Activated T-helper 1 cell treated with anti-CD3 and anti-CD28 coated beads, Interleukin-12 subunit alpha, Interleukin-12 subunit beta, Interleukin-2, Interleukin-4 antibody, amounts not matched to agents 30 ng/mL and 10 ng/mL and 1 ng/mL, durations not matched to agents 14 hours and 24 hours and 36 hours (primary cell): ENCODE measurements at regions of chr3 and their contacts with region 1.

Region 1: GRCh38 chr3:143060906-143061305 is 58.7 kb upstream of the CHST2 start:
- DNase-seq: no peak
- H3K4me3 Mint-ChIP-seq: no peak overlapping the region
- H3K27ac Mint-ChIP-seq: peak overlapping the region; percentile 66
- H3K4me1 Mint-ChIP-seq: peaks cover 22% of the 10 kb centered on the region
- H3K27me3 Mint-ChIP-seq: no peaks in the 10 kb centered on the region

Region 2: GRCh38 chr3:142787719-142788118 is 273.2 kb before region 1 on chr3:
- intact Hi-C with region 1: no loop called
- DNase-seq: no peak
- H3K4me3 Mint-ChIP-seq: no peak overlapping the region
- H3K27ac Mint-ChIP-seq: no peak overlapping the region
- H3K4me1 Mint-ChIP-seq: no peaks in the 10 kb centered on the region
- H3K27me3 Mint-ChIP-seq: peaks cover 4% of the 10 kb centered on the region

Region 3: DNA sequence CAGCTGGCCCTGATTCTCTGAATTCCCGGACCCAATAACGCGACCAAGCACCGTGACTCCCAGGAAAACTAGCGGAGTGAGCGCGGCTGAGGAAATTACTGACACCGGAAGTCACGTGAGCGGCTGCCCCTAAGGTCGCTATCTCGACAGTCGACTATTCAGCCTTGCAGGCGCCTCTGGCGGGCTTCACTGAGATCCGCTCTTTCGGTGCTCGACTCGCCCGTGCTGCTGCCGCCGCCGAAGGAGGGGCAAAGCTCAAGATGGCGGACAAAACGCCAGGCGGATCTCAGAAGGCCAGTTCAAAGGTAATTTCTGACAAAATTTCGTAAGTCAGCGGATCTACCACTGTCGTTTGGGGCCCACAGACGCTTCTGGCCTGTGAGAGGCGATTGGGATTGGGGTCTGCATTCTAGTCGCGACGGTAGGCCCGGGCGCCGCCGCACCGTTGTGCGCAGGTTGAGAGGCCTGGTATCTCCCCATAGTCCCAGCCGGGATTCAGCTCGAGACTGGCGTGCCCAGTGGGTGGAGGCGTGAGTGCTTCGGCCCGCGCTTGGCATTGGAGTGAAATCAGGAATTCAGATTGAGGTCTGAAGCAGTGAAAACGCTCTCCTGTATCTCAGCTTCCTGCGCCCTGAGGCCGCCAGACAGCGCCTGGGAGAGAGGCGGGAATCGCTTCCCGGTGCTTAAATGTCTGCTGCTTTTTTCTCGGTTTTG is 59.4 kb before region 1 on chr3 and contains the start of gene U2SURP:
- intact Hi-C with region 1: loop called (anchors 2 kb)
- DNase-seq: peak; percentile 91
- H3K4me3 Mint-ChIP-seq: peak within 1 kb of the TSS; percentile 95
- H3K27ac Mint-ChIP-seq: peak within 1 kb of the TSS; percentile 96
- H3K4me1 Mint-ChIP-seq: peaks cover 45% of the 10 kb centered on the region
- H3K27me3 Mint-ChIP-seq: peaks cover 6% of the 10 kb centered on the region
- total RNA-seq, gene U2SURP: 186 and 205 TPM in 2 replicates

Region 4: GRCh38 chr3:143037867-143038266 is 23.0 kb before region 1 on chr3:
- intact Hi-C with region 1: loop called (anchors 1 kb)
- DNase-seq: no peak
- H3K4me3 Mint-ChIP-seq: no peak overlapping the region
- H3K27ac Mint-ChIP-seq: no peak overlapping the region
- H3K4me1 Mint-ChIP-seq: peaks cover 17% of the 10 kb centered on the region
- H3K27me3 Mint-ChIP-seq: no peaks in the 10 kb centered on the region

Region 5: DNA sequence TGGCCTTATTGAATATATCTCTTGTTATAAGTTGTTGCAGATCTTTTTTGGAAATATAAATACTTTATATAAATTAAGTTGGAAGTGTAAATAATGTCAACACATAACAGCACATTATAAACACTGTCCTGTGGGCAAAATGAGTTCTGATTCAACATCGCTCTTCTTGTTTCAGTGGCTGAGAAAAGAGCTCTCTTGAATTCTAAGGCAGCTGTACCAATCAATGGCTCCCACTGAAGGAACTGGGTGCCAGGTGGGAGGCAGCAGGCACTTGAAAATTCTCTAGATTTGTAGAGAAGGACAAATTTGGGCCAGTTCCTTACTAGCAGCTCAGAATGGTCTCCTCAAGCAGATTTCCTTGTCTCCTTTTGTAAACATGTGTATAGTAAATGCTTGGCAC is 104.3 kb after region 1 on chr3:
- intact Hi-C with region 1: loop called (anchors 1 kb)
- DNase-seq: no peak
- H3K4me3 Mint-ChIP-seq: peak overlapping the region; percentile 52
- H3K27ac Mint-ChIP-seq: peak overlapping the region; percentile 87
- H3K4me1 Mint-ChIP-seq: peaks cover 71% of the 10 kb centered on the region
- H3K27me3 Mint-ChIP-seq: peaks cover 2% of the 10 kb centered on the region

Region 6: DNA sequence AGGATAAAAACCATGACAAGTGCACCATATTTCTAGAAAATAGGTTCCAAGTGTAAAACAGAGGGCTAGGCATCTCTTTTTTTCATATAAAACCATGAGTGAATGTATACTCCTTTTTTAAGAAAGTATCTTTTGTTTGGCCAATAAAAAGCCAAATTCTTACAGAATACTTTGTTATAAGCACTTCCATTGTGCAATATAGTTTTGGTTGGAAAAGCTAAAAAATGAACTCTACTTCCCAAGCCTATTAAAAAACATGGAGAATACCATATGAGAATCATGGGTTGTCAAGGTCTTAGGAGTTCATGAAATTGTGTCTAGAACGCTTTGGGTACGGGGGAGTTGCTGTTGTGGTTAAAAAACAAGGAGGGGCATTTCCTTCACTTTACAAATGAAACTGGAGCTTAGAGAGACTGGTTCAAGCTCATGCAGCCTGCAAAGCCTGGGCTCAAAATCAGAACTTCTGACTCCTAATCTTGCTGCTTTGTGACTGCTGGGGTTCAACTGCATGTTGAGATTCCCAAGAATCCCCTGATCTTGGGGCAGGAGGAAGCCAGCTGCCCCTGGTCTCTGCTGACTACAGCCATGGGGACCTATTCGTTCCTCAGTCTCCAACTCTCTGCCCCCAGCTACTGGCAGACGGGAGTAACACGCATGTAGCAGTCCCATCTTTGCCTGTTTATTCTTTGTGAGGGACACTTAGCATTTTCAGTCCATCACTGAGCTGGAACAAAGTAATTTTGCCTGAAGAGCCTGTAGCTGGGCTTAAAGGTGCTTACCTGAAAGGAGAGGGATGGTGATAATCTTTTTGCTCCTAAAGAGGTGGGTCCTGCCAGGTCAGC is 287.8 kb after region 1 on chr3:
- intact Hi-C with region 1: loop called (anchors 5 kb)
- DNase-seq: no peak
- H3K4me3 Mint-ChIP-seq: no peak overlapping the region
- H3K27ac Mint-ChIP-seq: no peak overlapping the region
- H3K4me1 Mint-ChIP-seq: peaks cover 28% of the 10 kb centered on the region
- H3K27me3 Mint-ChIP-seq: no peaks in the 10 kb centered on the region

Region 7: DNA sequence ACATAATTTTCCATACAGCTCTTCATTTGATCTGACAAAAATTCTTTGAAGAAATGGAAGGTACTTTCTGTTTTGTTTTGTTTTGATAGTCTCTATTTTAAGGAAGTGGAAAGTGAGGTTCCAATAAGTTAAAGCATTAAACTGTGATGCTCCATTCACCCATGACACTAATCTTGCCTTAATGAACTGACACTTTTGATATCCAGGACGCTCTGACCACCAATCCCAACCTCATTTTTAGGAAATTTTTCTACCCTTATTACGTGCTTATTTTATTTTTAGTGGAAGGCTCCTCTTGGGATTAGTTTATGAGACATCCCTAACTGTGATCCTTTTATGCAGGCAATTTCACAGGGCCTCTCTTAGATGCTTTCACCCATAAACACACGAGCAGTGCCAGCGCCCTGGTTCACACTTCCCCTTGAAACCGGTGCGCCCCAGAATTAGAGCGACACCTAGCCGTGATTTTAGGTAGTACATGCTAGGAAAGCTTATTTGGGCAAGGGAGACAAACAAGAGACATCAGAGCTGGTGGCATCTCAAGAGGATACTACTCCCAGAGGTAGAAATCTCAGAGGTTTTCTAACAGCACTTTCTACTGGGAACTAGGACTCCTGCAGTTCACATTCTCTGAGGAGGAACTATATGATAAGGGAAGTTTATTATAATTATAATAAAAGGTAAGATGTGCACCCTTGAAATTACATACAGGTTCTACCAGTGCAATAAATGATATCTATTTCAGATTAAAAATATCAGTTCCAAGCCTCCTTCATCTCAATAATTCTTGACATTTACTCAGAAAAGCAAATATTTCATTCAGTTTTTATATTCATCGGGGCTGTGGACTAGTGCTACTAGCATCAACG is 613.4 kb after region 1 on chr3:
- intact Hi-C with region 1: loop called (anchors 1 kb)
- DNase-seq: peak; percentile 64
- H3K4me3 Mint-ChIP-seq: no peak overlapping the region
- H3K27ac Mint-ChIP-seq: peak overlapping the region; percentile 11
- H3K4me1 Mint-ChIP-seq: peaks cover 7% of the 10 kb centered on the region
- H3K27me3 Mint-ChIP-seq: no peaks in the 10 kb centered on the region